Calu3 (cell line): ENCODE measurements at regions of chr2 and their contacts with region 1.

Region 1: GRCh38 chr2:65382776-65383357 is 49.5 kb downstream of the SPRED2 start:
- DNase-seq: peak; percentile 92
- H3K4me3 Mint-ChIP-seq: peak overlapping the region; percentile 64
- H3K27ac Mint-ChIP-seq: peak overlapping the region; percentile 80
- H3K4me1 Mint-ChIP-seq: peaks cover 95% of the 10 kb centered on the region
- H3K27me3 Mint-ChIP-seq: no peaks in the 10 kb centered on the region
- CTCF ChIP-seq: no peak

Region 2: GRCh38 chr2:65430603-65431420 is 47.9 kb after region 1 on chr2:
- CTCF ChIA-PET with region 1: interaction called, 4 read pairs
- intact Hi-C with region 1: loop called (anchors 1 kb)
- DNase-seq: peak; percentile 70
- H3K4me3 Mint-ChIP-seq: peak overlapping the region; percentile 94
- H3K27ac Mint-ChIP-seq: peak overlapping the region; percentile 61
- H3K4me1 Mint-ChIP-seq: no peaks in the 10 kb centered on the region
- H3K27me3 Mint-ChIP-seq: no peaks in the 10 kb centered on the region
- CTCF ChIP-seq: no peak